Psoas muscle (tissue), 8 donors: ENCODE measurements at regions of chr2 and their contacts with region 1.

Region 1: DNA sequence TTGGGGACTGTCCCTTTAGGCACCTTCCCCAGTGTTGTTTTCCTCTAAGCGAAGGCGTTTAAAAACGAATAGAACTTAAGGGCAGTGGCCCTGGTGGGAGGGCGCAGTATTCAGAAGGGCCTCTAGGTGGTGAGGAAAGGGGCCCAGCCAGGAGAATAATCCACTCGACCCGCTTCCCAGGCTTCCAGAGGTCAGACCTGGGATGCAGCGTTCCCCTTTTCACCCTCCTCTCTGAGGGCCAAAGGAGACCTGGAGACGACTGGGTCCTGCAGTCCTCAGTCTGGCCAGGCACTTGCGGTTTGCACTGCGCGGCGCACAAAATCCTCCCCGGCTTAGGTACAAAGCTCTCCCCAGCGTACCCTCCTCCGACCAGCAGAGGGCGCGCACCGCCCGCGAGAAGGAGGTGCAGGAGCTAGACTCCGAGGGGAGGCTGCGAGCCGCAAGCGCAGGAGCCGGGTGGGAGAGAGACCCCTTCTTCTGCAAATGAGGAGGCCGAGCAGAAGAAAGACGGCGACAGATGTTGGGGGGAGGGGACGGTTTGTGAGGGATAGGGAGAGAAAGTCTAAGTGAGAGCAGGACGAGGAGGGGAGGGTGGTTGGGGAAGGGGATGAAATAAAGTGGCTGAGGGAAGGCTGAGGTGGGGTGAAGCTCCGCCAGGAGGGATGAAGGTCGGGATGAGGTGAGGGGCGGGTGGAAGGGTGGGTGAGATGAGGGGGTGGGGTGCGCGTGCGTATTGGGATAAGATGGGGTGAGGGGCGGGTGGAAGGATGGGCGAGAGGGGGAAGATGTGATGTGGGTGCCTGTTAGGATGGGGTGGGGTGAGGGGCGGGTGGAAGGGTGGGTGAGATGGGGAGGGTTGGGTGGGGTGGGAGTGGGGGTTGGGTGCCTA is 4.9 kb downstream of the FEV start:
- DNase-seq: peak; percentile 85 to 90
- ATAC-seq: peak; percentile 80 to 94 (median 93)
- H3K4me3 ChIP-seq: peak overlapping the region; percentile 34
- H3K27ac ChIP-seq: no peak overlapping the region
- H3K4me1 ChIP-seq: peaks cover 15% of the 10 kb centered on the region
- H3K27me3 ChIP-seq: peaks cover 2 to 98% (median 29%) of the 10 kb centered on the region in 3 donors
- CTCF ChIP-seq: peak; percentile 87

Region 2: DNA sequence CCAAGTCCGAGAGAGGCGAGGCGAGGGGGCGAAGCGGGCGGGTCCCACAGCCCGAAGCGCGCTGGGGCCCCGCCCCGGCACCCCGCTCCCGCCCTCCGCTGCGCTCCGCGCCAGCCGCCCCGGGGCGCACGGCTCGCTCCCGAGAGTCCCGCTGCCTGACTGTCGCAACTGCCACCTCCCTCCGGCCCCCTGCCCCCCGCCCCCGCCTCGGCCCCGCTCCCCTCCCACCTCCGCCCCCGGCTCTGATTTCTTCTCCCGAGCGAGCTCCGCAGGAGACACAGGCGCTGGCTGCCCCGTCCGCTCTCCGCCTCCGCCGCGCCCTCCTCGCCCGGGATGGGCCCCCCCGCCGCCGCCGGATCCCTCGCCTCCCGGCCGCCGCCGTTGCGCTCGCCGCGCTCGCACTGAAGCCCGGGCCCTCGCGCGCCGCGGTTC is 120.5 kb before region 1 on chr2 and contains the start of gene WNT6:
- intact Hi-C with region 1: loop called in 1 of 2 experiments (anchors 5 kb)
- DNase-seq: peak in 1 of 2 donors; percentile 57
- ATAC-seq: peak in 2 of 4 donors; percentile 35 to 52
- H3K4me3 ChIP-seq: peak within 1 kb of the TSS; percentile 52
- H3K27ac ChIP-seq: no peak within 1 kb of the TSS
- H3K4me1 ChIP-seq: peaks cover 8% of the 10 kb centered on the region
- H3K27me3 ChIP-seq: peaks cover 0 to 51% (median 15%) of the 10 kb centered on the region in 3 donors
- CTCF ChIP-seq: no peak
- total RNA-seq, gene WNT6: 0.12 to 1.0 (median 0.48) TPM

Region 3: DNA sequence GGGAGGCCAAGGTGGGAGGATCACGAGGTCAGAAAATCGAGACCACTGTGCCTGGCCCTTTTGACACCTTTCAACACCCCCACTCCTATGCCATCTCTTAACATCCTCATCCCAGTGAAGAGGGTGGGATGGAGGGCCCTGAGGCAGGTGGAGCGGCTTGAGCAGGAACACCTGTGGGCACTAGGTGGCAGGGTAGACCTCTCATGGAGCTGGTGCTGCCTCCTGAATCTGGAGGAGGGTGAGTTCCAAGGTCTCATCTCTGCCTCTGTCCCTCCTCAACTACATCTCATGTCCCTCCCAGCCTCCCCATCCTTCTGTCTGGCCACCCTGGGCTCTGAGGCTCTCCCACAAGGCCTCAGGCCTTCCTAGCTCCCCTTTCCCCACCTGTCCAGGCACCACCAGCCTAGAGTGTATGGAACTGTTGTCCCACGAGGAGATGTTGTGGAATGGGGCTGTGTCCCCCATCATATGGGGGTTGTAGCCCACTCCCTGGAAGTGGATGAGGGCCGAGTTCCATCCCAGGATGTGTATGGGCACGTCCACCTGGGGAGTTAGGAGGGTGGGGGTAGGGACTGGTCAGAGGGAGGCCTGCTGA is 30.2 kb after region 1 on chr2:
- intact Hi-C with region 1: no loop called
- DNase-seq: no peak
- ATAC-seq: no peak
- H3K4me3 ChIP-seq: no peak overlapping the region
- H3K27ac ChIP-seq: no peak overlapping the region
- H3K4me1 ChIP-seq: no peaks in the 10 kb centered on the region
- H3K27me3 ChIP-seq: peaks cover 0 to 38% (median 4%) of the 10 kb centered on the region in 3 donors
- CTCF ChIP-seq: no peak

Region 4: DNA sequence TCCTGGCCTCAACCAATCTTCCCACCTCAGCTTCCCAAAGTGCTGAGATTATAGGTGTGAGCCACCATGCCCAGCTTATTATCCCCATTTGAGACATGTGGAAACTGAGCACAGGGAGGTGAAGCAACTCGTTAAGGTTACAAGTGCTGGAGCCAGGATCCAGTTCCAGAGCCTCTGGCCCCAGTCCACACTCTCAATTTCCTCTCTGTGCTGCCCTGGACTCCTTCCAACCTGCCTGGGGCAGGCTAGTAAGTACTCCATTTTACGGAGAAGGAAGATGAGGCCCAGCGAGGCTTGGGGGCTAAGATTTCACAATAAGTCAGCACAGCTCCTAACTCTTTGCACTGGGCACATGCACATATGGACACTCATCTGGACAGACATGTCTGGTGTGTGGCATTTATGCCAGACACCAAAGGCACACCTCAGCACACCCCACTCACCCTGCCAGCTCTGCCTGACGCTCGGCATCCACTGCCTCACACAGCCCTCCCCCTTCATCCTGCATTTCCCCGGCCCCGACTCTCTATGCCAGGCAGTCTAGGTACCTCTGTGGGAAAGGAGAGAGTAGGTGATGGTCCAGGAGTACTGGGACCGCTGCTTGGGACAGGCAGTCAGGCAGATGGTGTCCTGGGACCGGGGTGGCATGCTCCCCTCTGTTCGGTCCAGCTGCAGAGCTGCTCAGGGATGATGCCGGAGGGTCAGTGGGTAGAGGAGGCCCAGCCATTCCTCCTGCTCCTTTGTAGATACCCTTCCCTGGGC is 40.7 kb after region 1 on chr2:
- intact Hi-C with region 1: no loop called
- DNase-seq: peak in 1 of 2 donors; percentile 37
- ATAC-seq: no peak
- H3K4me3 ChIP-seq: no peak overlapping the region
- H3K27ac ChIP-seq: no peak overlapping the region
- H3K4me1 ChIP-seq: no peaks in the 10 kb centered on the region
- H3K27me3 ChIP-seq: no peaks in the 10 kb centered on the region
- CTCF ChIP-seq: no peak